Calu3 (cell line): ENCODE measurements at regions of chr9 and their contacts with region 1.

Region 1: DNA sequence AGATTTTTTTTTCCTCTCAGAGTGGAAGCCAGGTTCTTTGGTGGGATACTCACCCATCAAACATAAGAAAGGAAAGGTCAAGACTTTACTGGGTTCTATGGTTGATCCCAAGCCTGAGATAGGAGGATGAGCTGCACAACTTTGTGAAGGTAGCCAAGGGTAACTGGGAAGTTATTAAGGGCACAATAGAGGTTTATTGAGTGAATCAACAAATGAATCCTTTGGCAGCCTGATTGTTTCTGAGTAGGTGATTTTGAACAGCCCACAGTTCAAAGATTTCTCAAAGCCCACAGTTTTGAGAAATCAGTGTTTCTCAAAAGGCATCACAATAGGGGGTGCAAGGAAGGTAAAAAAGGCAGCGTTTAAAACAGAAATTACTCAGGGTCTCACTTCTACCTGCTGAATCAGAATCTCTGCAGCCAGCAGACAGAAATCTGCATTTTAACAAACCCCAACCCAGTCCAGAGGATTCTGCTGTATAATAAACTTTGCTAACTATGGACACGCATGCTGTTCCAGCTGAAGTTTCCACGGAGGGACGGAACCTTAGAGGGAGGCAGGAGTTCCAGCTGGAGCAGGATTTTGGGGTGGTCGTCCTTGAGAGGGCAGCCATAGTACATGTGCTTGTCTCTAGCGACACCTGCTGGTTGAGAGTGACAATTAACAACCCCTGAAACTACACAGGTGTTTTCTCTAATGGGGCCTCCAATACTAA is 32.7 kb upstream of the FSD1L start:
- DNase-seq: peak; percentile 41
- H3K4me3 Mint-ChIP-seq: no peak overlapping the region
- H3K27ac Mint-ChIP-seq: no peak overlapping the region
- H3K4me1 Mint-ChIP-seq: no peaks in the 10 kb centered on the region
- H3K27me3 Mint-ChIP-seq: no peaks in the 10 kb centered on the region
- CTCF ChIP-seq: peak; percentile 78

Region 2: DNA sequence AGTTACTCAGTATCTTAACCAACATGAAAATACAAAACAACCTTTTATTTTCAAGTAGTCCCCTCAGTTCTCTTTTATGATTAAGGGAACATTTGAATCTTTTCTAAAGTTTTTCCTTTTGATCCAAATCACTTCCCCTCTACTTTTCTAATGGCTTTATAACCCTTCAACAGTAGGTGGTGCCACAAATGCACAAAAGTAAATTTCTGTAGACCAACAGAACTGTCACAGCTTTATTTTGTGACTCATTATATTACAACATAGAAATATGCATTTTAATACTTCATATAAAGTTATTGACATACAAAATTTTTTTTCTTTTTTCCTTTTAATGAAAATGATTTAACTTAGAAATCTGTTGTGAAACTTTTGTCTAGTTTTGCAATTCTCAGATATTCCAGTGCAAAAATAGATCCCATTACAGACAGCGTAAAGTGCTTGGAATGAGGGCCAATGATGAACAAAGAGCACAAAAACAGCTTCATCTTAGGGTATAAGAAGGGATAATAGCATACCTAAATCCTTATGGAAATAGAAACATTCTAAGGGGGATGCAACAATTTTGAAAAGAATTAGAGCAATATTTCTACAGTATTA is 634.2 kb before region 1 on chr9:
- CTCF ChIA-PET with region 1: no interaction called
- intact Hi-C with region 1: loop called (anchors 1 kb)
- DNase-seq: peak; percentile 13
- H3K4me3 Mint-ChIP-seq: no peak overlapping the region
- H3K27ac Mint-ChIP-seq: no peak overlapping the region
- H3K4me1 Mint-ChIP-seq: no peaks in the 10 kb centered on the region
- H3K27me3 Mint-ChIP-seq: peaks cover 10% of the 10 kb centered on the region
- CTCF ChIP-seq: peak; percentile 20

Region 3: DNA sequence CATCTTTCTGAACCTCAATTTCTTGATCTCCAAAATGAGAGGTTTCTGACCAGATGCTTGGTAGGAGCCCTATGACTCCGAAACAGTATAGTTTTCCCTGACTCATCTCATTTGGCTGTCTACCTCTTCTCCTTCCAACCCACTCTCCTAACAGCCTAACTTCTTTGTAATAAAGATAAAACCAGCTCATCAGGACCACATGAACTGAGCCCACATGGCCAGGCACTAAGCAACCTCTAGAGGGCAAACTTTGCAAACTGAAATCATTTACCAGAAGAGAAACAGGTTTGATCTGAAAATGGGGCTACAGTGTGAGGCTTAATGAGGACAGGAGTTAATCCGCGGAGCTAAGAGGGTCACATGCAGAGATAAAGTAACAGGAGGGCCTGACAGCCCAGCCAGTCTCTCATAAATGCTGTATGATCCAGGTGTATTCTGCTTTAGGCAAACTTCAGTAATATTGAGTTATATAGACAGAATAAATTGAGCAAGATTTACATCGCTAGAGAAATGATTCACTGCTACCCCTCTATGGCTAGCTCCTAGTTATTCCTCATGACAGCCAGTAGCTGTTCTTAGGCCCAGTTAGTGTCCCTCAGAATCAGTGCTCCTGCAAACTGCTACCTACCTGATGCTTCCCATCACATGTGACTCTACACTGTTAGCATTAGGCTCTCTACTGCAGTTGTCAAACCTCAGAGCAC is 551.8 kb before region 1 on chr9:
- CTCF ChIA-PET with region 1: no interaction called
- intact Hi-C with region 1: loop called (anchors 5 kb)
- DNase-seq: peak; percentile 44
- H3K4me3 Mint-ChIP-seq: no peak overlapping the region
- H3K27ac Mint-ChIP-seq: no peak overlapping the region
- H3K4me1 Mint-ChIP-seq: peaks cover 13% of the 10 kb centered on the region
- H3K27me3 Mint-ChIP-seq: no peaks in the 10 kb centered on the region
- CTCF ChIP-seq: peak; percentile 32

Region 4: DNA sequence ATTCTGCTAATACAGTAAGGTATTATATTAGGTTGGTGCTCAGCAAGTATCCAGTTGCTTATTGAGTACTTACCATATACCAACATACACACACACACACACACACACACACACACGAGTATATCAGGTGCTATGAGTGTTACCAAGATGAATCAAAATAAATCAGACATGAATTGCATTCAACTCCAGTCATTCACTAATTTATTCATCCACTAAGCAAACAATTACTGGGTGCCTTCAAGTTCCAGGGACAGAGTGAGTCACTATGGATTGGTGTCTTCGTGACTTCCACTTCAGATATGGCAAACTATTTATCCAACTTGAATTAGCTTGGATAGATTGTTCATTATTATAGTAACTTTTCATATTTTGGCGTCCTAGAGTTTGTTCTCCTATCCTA is 311.3 kb before region 1 on chr9:
- CTCF ChIA-PET with region 1: no interaction called
- intact Hi-C with region 1: no loop called
- DNase-seq: no peak
- H3K4me3 Mint-ChIP-seq: no peak overlapping the region
- H3K27ac Mint-ChIP-seq: no peak overlapping the region
- H3K4me1 Mint-ChIP-seq: no peaks in the 10 kb centered on the region
- H3K27me3 Mint-ChIP-seq: no peaks in the 10 kb centered on the region
- CTCF ChIP-seq: no peak

Region 5: GRCh38 chr9:105245029-105245890 is 169.8 kb before region 1 on chr9:
- CTCF ChIA-PET with region 1: interaction called, 5 read pairs
- intact Hi-C with region 1: loop called (anchors 5 kb)
- DNase-seq: peak; percentile 78
- H3K4me3 Mint-ChIP-seq: peak overlapping the region; percentile 96
- H3K27ac Mint-ChIP-seq: peak overlapping the region; percentile 70
- H3K4me1 Mint-ChIP-seq: peaks cover 7% of the 10 kb centered on the region
- H3K27me3 Mint-ChIP-seq: no peaks in the 10 kb centered on the region
- CTCF ChIP-seq: no peak

Region 6: GRCh38 chr9:105500108-105500766 is 85.1 kb after region 1 on chr9:
- CTCF ChIA-PET with region 1: no interaction called
- intact Hi-C with region 1: no loop called
- DNase-seq: no peak
- H3K4me3 Mint-ChIP-seq: no peak overlapping the region
- H3K27ac Mint-ChIP-seq: no peak overlapping the region
- H3K4me1 Mint-ChIP-seq: no peaks in the 10 kb centered on the region
- H3K27me3 Mint-ChIP-seq: no peaks in the 10 kb centered on the region
- CTCF ChIP-seq: no peak